Ascending aorta (tissue), 2 donors: ENCODE measurements at regions of chr17 and their contacts with region 1.

Region 1: DNA sequence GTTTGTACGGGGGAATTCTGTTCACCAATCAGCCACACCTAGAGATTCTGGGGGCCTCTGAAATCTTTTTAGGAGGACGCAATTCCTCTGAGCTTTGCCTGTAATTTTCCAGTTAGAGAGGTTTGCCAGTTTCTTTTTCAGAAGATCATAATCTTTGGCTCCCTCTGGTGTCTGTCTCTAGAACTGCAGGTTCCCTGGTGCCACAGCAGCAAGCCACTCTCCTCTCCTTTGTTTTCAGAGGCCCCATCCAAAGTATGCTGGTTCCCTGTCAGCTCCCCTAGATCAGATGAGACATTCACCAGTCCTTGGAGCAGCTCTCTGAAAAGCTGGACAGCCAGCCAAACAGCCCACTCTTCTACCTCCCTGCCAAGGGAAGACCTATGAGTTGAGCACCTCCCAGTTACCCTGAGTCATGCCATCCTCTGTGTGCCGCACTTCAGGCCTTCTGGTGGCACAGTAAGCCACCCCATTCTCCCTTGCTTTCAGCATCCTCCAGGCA is 36.1 kb downstream of the RNF112 start:
- DNase-seq: peak in 1 of 2 donors; percentile 88
- H3K4me3 ChIP-seq: no peak overlapping the region
- H3K27ac ChIP-seq: peak overlapping the region; percentile 85 to 89
- H3K4me1 ChIP-seq: peaks cover 14 to 24% of the 10 kb centered on the region in 2 donors
- H3K27me3 ChIP-seq: no peaks in the 10 kb centered on the region
- CTCF ChIP-seq: peak; percentile 93 to 98 (median 97)

Region 2: GRCh38 chr17:19260958-19261357 is 186.2 kb before region 1 on chr17:
- intact Hi-C with region 1: loop called (anchors 5 kb)
- DNase-seq: no peak
- H3K4me3 ChIP-seq: no peak overlapping the region
- H3K27ac ChIP-seq: no peak overlapping the region
- H3K4me1 ChIP-seq: peaks cover 15 to 33% of the 10 kb centered on the region in 2 donors
- H3K27me3 ChIP-seq: no peaks in the 10 kb centered on the region
- CTCF ChIP-seq: no peak

Region 3: DNA sequence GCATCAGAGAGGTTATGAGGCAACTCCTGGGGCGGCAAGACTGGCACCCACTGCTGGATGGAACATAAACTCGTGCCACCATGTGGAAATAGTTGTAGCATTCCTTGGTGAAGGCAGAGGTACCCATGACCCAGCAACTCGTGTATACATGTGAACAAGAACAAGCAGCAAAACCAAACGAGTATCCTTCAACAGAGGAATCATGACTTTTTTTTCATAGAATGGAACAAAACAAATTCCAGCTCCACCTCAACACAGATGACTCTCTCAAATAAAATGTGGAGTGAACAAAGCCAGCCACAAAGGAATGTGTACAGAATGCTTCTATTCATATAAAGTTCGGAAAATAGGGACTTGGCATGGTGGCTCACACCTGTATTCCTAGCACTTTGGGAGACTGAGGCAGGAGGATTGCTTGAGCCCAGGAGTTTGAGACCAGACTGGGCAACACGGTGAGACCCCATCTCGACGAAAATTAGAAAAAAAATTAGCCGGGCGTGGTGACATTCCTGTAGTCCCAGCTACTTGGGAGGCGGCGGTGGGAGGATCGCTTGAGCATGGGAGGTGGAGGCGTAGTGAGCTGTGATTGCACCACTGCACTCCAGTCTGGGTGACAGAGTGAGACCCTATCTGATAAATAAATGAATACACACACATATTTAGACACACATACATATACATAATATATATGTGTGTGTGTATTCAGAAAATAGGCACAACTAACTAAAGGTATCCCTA is 119.9 kb before region 1 on chr17:
- intact Hi-C with region 1: no loop called
- DNase-seq: peak in 1 of 2 donors; percentile 5
- H3K4me3 ChIP-seq: no peak overlapping the region
- H3K27ac ChIP-seq: no peak overlapping the region
- H3K4me1 ChIP-seq: no peaks in the 10 kb centered on the region
- H3K27me3 ChIP-seq: no peaks in the 10 kb centered on the region
- CTCF ChIP-seq: no peak

Region 4: DNA sequence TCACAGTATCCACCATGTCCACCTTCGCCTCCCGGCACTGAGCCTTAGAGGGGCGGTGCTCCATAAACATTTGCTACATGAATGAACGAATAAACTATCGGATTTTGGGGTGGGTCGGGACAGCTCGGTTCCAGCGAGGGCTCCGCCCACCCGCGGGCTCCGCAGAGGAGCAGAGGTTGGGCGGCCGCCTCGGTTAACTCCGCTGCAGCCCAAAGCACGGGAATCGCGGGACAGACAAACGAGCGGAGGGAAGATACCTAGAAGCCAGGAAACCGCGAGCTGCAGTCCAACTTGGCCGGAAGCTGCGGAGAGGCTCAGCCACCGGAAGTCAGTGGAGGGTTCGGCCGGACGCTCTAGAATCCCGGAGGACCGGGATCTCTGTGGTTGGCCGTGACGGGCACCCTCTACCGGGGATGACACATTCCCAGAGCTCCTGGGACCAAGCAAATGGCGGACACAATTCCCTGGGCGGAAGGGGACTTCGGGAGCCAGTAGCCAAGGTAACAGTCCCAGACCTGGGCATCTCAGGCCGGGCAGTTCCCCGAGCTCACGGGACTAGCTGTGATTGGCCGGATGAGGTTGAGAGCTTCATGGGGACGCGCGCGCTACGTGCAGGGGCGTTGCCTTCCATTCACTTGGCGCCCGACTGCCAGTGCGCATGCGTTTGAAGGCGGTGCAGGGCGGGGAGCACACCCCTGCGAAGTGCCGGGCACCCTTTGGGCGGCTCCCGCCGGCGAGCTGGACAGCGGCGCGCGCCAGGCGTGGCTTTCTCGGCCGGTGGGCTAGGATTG is 69.3 kb before region 1 on chr17:
- intact Hi-C with region 1: loop called (anchors 1 kb)
- DNase-seq: peak; percentile 95 to 99
- H3K4me3 ChIP-seq: peak overlapping the region; percentile 81 to 98
- H3K27ac ChIP-seq: peak overlapping the region; percentile 93 to 98
- H3K4me1 ChIP-seq: peaks cover 3 to 15% of the 10 kb centered on the region in 2 donors
- H3K27me3 ChIP-seq: no peaks in the 10 kb centered on the region
- CTCF ChIP-seq: peak in 1 of 3 experiments; percentile 10

Region 5: DNA sequence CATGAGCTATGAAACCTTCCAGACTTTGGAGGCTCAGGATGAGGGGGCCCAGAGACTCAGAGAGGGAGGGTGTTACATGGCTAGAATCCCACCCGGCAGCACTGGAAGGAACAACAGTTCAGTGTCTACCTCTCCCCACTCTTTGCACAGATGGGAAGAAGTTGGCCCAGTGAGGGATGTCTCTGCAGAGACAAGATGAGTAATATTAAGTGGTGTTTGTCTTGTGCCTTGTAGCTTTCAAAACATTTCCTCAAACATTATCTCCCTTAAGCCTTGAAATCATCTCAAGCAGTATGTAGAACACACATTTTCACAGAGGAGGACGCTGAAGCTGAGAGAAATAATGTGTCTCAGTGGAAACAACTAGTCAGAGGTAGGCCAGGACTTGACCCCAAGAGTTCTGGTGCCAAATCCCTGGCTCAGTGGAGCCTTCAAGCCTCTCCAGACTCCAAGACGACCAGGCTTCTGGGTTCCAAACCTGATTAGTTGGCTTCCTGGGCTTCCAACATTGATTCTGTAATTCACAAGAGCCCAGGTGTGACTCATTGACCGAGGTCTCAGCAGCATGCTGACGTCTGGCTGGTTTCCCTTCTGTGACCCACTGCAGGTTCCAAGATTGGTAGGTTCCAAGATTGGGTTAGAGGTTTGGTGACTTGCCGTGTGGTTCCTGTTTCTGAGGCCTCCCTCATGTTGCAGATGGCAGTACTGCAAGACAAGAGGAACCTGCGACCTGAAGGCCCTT is 28.7 kb before region 1 on chr17:
- intact Hi-C with region 1: no loop called
- DNase-seq: peak in 1 of 2 donors; percentile 77
- H3K4me3 ChIP-seq: no peak overlapping the region
- H3K27ac ChIP-seq: peak overlapping the region; percentile 14 to 55
- H3K4me1 ChIP-seq: no peaks in the 10 kb centered on the region
- H3K27me3 ChIP-seq: no peaks in the 10 kb centered on the region
- CTCF ChIP-seq: peak in 2 of 3 experiments; percentile 29 to 40

Region 6: DNA sequence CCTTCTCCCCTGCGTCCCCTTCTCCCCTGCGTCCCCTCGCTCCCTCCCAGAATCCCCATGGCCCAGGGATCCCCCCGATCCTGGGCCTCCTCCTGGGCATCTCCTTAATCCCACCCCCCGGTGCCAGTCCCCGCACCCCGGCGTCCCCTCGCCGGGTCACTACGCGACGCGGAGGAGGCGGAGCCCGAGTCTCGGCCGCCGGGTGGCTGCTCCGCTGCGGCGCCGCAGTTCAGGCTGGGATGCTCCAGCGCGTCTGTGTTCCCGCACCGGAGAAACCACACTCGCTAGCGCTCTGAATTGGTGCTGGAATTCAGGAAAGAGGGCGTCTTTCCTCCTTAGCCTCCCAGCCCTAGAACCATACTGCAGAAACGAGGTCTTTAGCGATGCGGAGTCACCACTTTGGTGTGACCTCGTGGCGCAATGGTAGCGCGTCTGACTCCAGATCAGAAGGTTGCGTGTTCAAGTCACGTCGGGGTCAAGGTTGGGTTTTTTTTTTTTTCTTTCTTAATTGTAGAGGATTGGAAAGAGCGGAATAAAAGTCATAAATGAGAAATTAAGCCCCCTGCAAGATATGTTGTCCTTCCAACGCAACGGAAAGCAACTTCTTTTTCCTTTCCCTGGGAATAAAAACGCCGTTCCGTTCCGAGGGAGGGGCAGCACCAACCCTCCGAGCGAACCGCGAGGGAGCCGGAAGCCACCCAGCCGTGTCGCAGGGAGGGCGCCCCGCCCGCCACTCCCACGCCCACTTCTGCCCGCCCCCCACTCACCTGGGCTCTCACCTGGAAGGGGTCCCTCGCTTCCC is 60.8 kb after region 1 on chr17:
- intact Hi-C with region 1: loop called (anchors 2 kb)
- DNase-seq: peak; percentile 49 to 95
- H3K4me3 ChIP-seq: peak overlapping the region; percentile 83 to 87
- H3K27ac ChIP-seq: peak overlapping the region; percentile 97 to 98
- H3K4me1 ChIP-seq: peaks cover 0 to 6% of the 10 kb centered on the region in 2 donors
- H3K27me3 ChIP-seq: no peaks in the 10 kb centered on the region
- CTCF ChIP-seq: no peak

Region 7: GRCh38 chr17:19753049-19753444 is 305.9 kb after region 1 on chr17:
- intact Hi-C with region 1: loop called (anchors 1 kb)
- DNase-seq: peak; percentile 78 to 95
- H3K4me3 ChIP-seq: no peak overlapping the region
- H3K27ac ChIP-seq: peak overlapping the region; percentile 93 to 99
- H3K4me1 ChIP-seq: peaks cover 10 to 30% of the 10 kb centered on the region in 2 donors
- H3K27me3 ChIP-seq: no peaks in the 10 kb centered on the region
- CTCF ChIP-seq: no peak

Region 8: GRCh38 chr17:19766422-19767270 is 319.5 kb after region 1 on chr17:
- intact Hi-C with region 1: loop called (anchors 5 kb)
- DNase-seq: peak in 1 of 2 donors; percentile 86
- H3K4me3 ChIP-seq: no peak overlapping the region
- H3K27ac ChIP-seq: no peak overlapping the region
- H3K4me1 ChIP-seq: peaks cover 0 to 5% of the 10 kb centered on the region in 2 donors
- H3K27me3 ChIP-seq: no peaks in the 10 kb centered on the region
- CTCF ChIP-seq: peak; percentile 94 to 99 (median 97)